ENCODE measurements at regions of chr11 and their contacts with region 1.

Region 1: GRCh38 chr11:6377902-6378639 is 12.2 kb upstream of the SMPD1 start:
- DNase-seq: no peak
- H3K4me3 ChIP-seq: no peak overlapping the region
- H3K27me3 ChIP-seq: no peaks in the 10 kb centered on the region; the same call in none of the 2 replicates
- CTCF ChIP-seq: no peak

Region 2: GRCh38 chr11:6170226-6170625 is 207.8 kb before region 1 on chr11 and contains the start of gene OR52B2:
- CTCF ChIA-PET with region 1: no interaction called
- POLR2A ChIA-PET with region 1: no interaction called
- DNase-seq: no peak
- H3K4me3 ChIP-seq: no peak within 1 kb of the TSS
- H3K27me3 ChIP-seq: no peaks in the 10 kb centered on the region
- CTCF ChIP-seq: no peak
- polyA plus RNA-seq, gene OR52B2: not detected in 2 replicates

Region 3: DNA sequence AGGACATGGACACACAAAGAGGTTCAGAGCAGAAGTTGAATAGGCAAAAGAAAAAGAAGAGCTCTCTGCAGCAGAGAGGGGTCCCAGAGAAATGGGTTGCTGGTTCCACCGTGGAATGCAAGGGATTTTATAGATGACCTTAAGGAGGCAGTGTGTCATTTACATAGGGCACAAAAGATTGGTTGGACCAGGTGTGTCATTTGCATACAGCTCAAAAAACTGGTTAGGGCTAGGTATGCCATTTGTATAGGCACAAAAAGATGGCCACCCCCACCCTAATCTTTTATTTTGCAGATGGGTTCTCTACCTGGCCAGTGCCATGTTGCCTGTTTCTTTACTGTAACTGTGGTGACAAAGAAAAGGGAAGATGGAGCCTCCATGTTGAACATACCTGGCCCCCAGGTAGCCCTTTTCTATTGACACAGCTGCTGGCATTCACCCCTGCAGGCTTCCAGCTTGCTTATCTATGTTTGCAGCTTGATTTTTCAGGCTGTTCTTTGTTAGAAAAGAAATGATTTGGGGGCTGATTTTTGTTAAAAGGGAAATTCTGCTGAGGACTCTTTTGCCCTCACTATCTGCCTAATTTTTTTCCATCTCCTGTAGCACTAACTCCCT is 54.7 kb before region 1 on chr11:
- CTCF ChIA-PET with region 1: no interaction called
- POLR2A ChIA-PET with region 1: no interaction called
- DNase-seq: no peak
- H3K4me3 ChIP-seq: no peak overlapping the region
- H3K27me3 ChIP-seq: no peaks in the 10 kb centered on the region
- CTCF ChIP-seq: no peak

Region 4: DNA sequence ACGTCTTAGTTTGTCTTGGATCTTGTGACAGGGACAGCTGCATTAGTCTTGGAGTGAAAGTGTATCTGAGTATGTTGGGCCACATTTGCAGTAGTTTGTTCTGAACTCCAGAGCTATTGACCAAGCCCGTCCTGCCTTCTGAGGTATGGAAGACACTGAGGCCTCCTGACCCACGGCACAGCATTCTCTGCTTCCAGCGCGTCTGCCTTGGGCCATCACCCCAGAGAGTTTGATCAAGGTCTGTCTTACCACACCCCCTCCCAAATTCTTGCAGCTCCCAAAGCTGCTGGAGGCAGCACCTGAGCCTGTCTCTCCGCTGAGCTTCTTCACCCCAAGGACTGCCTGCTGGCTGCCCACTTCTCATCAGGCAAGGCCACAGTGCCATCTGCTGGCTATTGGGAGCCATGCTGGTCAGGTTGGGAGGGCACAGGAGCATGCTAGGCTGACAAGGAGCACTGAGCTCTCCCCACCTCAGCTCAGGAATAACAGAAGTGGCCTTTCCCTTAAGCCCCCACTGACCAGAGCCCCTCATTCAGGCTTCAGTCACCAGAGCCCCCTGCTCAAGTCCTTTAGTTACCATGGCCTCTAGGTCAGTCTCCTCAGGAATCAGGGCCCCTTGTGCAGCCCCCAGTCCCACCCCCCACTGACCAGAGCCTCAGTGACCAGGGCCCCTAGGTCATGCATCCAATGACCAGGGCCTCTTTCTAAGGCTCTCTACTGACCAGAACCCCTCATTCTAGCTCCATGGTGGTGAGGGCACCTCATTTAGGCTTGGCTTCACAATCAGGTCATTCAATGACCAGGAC is 15.0 kb before region 1 on chr11:
- CTCF ChIA-PET with region 1: interaction called, 98 read pairs
- POLR2A ChIA-PET with region 1: no interaction called
- DNase-seq: no peak
- H3K4me3 ChIP-seq: no peak overlapping the region
- H3K27me3 ChIP-seq: peaks cover 2% of the 10 kb centered on the region; the same call in 1 of the 2 replicates
- CTCF ChIP-seq: peak; percentile 98

Region 5: DNA sequence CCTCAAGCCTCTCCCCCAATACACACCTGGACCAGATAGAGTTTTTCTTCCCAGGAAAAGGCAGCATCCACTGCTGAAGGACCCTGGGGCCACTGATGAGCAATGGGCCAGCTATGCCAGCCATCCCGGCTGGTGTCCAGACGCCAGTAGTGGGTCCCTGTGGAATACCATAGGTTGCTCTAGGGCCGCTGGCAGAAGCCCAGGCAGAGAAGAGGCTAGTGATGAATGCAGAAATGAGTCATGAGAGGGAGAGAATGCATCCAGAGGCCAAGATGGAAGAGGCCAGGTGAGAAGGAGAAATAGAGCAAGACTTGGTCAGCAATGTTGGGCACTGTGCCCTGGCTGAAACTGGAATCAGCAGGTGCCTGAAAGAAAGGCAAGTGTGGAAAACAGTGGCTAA is 53.8 kb after region 1 on chr11:
- CTCF ChIA-PET with region 1: interaction called, 376 read pairs
- POLR2A ChIA-PET with region 1: no interaction called
- DNase-seq: no peak
- H3K4me3 ChIP-seq: no peak overlapping the region
- H3K27me3 ChIP-seq: no peaks in the 10 kb centered on the region
- CTCF ChIP-seq: no peak

Region 6: GRCh38 chr11:6452219-6452618 is 74.1 kb after region 1 on chr11:
- CTCF ChIA-PET with region 1: interaction called, 376 read pairs
- POLR2A ChIA-PET with region 1: no interaction called
- DNase-seq: no peak
- H3K4me3 ChIP-seq: no peak overlapping the region
- H3K27me3 ChIP-seq: no peaks in the 10 kb centered on the region
- CTCF ChIP-seq: no peak

Region 7: GRCh38 chr11:6531267-6531752 is 153.2 kb after region 1 on chr11:
- CTCF ChIA-PET with region 1: interaction called, 10 read pairs
- POLR2A ChIA-PET with region 1: no interaction called
- DNase-seq: no peak
- H3K4me3 ChIP-seq: no peak overlapping the region
- H3K27me3 ChIP-seq: no peaks in the 10 kb centered on the region
- CTCF ChIP-seq: peak; percentile 82

Region 8: DNA sequence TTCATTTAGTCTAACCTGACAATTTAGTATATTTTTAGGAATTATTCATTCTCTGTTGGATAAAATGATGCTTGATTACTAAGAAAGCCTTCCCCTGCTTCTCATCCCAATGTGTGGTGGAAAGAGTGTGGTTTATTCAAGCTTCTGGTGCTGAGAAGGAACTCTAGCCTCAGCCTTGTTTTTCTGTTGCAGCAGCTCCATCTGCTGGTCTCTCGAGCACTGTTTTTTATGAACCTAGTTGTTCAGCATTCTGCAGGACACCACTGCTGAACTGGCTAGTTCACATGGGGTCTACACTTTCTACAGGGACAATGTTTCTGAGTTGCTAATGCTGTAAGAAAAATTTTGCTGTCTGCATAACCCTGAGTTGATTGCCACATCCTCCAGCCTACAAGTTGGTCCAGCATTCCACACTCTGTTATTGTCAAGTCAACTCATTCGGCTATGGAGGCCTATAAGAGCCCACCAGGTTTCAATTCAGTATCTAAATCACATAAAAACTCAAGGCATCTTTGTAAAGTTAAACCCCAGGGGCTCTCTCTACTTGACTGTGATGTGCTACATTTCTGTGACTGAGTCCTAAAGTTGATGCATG is 379.4 kb after region 1 on chr11:
- CTCF ChIA-PET with region 1: interaction called, 31 read pairs
- POLR2A ChIA-PET with region 1: no interaction called
- DNase-seq: no peak
- H3K4me3 ChIP-seq: no peak overlapping the region
- H3K27me3 ChIP-seq: peaks cover 1% of the 10 kb centered on the region; the same call in 1 of the 2 replicates
- CTCF ChIP-seq: peak; percentile 76